ENCODE measurements at regions of chr14 and their contacts with region 1.

Region 1: DNA sequence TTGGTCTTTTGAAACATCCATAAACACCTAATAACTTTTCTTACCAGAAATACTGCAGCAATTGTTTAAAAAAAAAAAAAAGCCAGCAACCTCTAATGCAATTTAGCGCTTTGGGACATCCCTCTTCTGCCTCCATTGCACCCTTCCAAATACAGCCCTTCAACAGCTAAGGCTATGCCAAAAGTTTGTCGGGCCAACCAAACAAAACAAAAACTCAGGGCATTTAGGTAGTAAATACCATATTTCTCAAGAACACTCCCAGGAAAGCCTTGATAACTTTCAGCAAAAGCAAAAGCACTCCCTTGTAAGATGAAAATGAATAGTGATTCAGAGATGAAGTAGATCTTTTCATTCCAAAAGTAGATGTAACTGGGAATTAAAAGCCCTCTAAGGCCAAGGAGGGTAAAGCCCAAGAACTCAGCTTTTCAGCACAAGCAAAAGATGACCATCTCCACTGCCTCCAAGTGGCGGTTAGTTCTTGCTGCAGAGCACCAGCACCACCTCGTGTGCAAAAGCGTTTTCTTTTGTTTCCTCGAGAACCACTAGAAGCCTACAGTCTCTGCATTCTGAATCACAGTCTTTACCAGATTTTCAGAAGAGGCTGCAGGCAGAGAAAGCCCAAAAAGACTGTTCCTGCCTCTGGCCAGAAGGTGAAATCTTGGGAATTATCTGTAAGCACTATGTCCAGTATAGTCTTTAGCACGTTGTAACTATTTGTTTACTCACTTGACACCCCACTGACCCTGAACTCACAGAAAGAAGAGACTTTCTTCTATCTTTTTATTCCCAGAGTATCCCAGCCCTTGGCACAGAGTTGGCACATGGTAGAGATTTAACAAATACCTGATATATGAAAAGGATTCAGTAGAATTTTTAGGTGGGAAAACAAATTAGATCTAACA is 53.1 kb downstream of the SIX6 start:
- DNase-seq: peak; percentile 42
- CTCF ChIP-seq: peak; percentile 74

Region 2: DNA sequence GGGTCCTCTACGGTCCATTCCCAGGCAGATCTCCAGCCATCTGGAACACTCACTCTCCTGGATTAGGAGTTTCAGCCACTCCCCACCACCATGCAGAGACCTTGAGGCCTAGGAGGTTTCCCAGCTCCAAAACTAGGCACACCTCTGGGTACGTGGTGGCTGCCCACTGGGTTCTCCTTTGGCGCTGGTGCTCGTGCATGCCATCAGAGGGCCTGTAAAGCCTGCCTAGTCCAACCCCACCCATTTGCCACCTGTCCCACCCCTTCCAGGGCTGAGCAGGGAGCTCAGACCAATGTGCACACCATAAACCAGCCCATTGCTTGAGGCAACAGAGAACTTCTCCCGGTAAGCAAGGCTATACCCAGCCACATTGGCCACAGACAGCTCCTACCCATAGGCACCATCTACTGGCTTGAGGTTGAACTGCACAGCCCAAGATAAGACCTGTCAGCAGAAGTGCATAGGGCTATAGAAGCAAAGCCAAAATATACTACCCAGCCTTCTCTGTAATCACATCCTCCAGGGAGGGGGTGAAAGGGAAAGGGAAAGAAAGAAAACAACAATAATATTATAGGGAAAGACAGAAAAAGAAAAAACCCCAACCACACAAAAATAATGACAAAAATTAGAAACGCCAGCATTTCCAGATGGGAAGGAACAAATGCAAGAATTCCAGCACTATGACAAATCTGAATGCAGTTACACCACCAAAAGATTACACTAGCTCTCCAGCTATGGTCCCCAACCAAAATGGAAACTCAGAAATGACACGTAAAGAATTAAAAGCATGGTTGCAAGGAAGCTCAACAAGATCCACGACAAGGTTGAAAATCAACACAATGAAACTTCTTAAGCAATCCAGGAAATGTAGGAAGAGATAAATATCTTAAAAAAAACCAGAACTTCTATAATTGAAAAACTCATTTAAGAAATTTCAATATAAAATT is 873.6 kb before region 1 on chr14:
- in situ Hi-C with region 1: no loop called
- DNase-seq: peak; percentile 39
- CTCF ChIP-seq: peak; percentile 80

Region 3: GRCh38 chr14:60064491-60065072 is 497.5 kb before region 1 on chr14:
- in situ Hi-C with region 1: loop called (anchors 25 kb)
- DNase-seq: peak; percentile 53
- CTCF ChIP-seq: peak; percentile 23

Region 4: DNA sequence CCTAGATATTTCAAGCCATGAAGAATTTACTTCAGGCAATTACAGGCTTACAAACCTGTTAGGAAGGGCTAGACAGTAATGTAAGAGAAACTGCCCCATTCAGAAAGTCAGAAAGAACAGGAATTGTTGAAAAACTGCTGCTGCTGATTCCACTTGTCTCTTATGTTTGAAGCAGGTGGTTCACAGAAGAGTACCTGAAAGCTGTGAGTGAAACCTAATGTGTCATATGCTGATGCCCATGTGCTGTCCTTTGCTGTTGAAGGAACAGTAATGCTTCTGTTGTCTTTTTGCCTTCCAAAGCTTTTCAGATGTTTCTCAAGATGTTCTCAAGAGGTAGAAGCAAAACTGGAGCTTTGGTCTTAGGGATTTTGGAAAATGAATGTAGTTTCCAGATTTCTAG is 211.5 kb after region 1 on chr14:
- in situ Hi-C with region 1: no loop called
- DNase-seq: no peak
- CTCF ChIP-seq: no peak

Measured in GM13976 (cell line).